ENCODE measurements at regions of chr10 and their contacts with region 1.

Region 1: GRCh38 chr10:4607681-4608080 is 218.3 kb upstream of the AKR1E2 start:
- DNase-seq: no peak
- ATAC-seq: no peak
- H3K4me3 ChIP-seq: no peak overlapping the region
- H3K27ac ChIP-seq: no peak overlapping the region
- H3K4me1 ChIP-seq: no peaks in the 10 kb centered on the region
- H3K27me3 ChIP-seq: no peaks in the 10 kb centered on the region
- CTCF ChIP-seq: no peak
- POLR2A ChIP-seq: no peak

Region 2: DNA sequence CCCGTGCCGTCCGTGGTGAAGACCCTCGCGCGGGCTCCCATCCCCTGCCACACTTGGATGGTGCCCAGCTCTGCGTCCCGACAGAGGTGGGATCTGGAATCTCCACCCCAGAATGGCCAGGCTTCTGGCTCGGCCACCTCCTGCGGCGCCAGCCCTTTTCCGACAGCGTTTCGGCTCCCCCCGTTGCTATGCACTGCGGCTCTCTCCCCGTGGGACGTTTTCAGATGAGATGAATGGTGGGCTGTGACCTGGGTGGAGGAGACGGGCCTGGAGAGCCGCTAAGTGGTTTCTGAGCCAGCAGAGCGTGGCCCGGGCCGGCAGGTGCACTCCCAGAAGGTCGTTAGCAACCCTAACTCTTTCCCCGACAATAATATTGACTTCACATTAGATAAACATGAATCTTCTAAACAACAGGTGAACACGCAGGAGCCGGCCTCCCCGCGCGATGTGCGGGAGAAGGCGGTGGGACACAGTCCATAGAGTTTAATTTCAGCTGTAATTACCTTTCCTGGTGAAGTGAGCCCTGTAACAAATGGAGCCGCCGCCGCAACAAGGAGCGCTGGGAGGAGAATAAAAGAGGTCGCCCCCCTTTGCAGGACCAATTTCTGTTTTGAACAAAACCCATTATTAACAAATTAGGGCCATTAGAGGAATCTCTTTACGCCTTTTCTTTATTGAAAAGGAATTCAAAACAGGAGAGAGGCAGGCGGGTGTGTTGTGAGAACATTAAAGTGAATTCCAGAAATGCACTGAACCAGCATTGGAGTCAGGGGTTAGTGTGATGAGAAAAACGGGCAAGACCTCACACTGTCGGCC is 1834.7 kb before region 1 on chr10:
- intact Hi-C with region 1: no loop called
- DNase-seq: peak in 1 of 5 donors; percentile 57
- ATAC-seq: no peak
- H3K4me3 ChIP-seq: no peak overlapping the region
- H3K27ac ChIP-seq: no peak overlapping the region
- H3K4me1 ChIP-seq: no peaks in the 10 kb centered on the region
- H3K27me3 ChIP-seq: peaks cover 0 to 16% (median 0%) of the 10 kb centered on the region in 9 donors
- CTCF ChIP-seq: no peak
- POLR2A ChIP-seq: no peak

Region 3: GRCh38 chr10:4270116-4270515 is 337.6 kb before region 1 on chr10:
- intact Hi-C with region 1: no loop called
- DNase-seq: no peak
- ATAC-seq: peak; percentile 60 to 83 (median 75)
- H3K4me3 ChIP-seq: no peak overlapping the region
- H3K27ac ChIP-seq: peak overlapping the region in 1 of 12 donors; percentile 9
- H3K4me1 ChIP-seq: peaks cover 0 to 31% (median 11%) of the 10 kb centered on the region in 12 donors
- H3K27me3 ChIP-seq: no peaks in the 10 kb centered on the region
- CTCF ChIP-seq: no peak
- POLR2A ChIP-seq: no peak

Region 4: GRCh38 chr10:4568731-4569130 is 39.0 kb before region 1 on chr10:
- intact Hi-C with region 1: loop called in 1 of 10 experiments (anchors 5 kb)
- DNase-seq: no peak
- ATAC-seq: no peak
- H3K4me3 ChIP-seq: no peak overlapping the region
- H3K27ac ChIP-seq: no peak overlapping the region
- H3K4me1 ChIP-seq: peaks cover 0 to 8% (median 0%) of the 10 kb centered on the region in 12 donors
- H3K27me3 ChIP-seq: no peaks in the 10 kb centered on the region
- CTCF ChIP-seq: no peak
- POLR2A ChIP-seq: no peak